Naive thymus-derived CD8-positive, alpha-beta T cell (primary cell): ENCODE measurements at regions of chr5 and their contacts with region 1.

Region 1: DNA sequence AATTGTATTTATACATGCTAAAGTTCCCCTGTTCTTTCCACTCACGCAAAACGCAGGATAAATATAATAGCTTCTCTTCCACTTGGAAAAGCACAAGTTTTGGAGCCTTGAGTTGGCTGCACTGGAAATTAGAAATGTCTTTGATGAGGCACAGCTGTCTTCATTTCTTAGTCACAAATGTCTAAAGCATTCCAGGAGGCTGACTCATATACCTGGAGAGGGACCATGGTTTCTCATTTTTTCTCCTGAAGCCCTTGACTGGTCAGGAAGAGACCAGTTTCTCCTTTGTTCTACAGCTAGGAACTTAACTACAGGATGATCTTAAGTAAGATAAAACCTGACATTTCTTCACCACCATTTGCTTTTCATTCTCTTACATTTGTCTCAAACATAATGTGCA is 16.2 kb downstream of the MTX3 start:
- DNase-seq: no peak
- ATAC-seq: no peak
- H3K4me3 Mint-ChIP-seq: no peak overlapping the region
- H3K27ac Mint-ChIP-seq: no peak overlapping the region
- H3K4me1 Mint-ChIP-seq: peaks cover 0 to 5% (median 1%) of the 10 kb centered on the region in 4 donors
- H3K27me3 Mint-ChIP-seq: peaks cover 0 to 3% (median 0%) of the 10 kb centered on the region in 5 donors

Region 2: DNA sequence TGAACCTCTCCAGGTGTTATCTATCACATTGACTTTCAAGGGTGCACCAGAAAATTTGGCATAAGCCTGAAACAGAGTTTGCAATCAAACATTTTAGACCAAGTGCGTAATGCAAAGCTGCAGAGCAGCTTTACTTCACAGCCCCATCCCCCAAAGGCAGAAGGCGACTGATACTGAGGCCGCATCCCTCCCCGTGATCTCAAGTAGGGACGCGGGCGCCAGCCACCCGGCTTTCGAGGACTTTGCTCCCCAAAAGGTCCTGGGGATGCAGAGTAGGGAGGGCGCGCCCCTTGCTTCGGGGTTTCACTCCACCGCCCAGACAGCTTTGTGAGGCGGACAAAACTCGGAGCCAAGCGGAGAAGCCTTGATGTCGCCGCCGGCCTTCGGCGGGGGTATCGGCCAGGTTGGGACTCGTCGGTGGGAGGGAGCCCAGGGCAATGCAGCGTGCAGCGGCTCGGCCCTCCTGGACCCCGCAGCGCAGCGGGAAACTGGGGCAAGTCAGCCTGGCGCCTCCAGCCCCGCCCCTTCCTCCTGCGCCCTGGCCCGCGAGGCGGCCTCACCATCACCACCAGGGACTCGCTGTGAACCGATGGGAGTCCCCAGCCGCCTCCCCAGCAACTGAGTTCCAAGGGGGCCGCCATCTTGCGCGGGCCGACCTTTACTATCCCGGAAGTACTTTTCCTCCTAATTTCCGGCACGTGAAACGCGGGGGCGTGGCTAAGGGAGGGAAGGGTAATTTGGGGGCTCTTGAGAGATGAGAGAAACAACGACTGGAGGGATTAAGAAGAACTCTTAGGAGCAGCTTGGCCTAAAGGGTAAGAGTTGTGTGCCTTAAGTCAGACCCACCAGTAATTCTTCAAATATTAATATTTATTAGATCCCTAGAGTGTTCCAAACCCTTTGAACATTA is 16.0 kb after region 1 on chr5 and contains the start of gene MTX3:
- POLR2A ChIA-PET with region 1: interaction called, 30 read pairs
- DNase-seq: peak; percentile 74 to 93 (median 84)
- ATAC-seq: peak; percentile 97
- H3K4me3 Mint-ChIP-seq: peak within 1 kb of the TSS; percentile 82 to 94 (median 90)
- H3K27ac Mint-ChIP-seq: peak within 1 kb of the TSS; percentile 79 to 97 (median 94)
- H3K4me1 Mint-ChIP-seq: peaks cover 10 to 32% (median 27%) of the 10 kb centered on the region in 4 donors
- H3K27me3 Mint-ChIP-seq: peaks cover 0 to 11% (median 6%) of the 10 kb centered on the region in 5 donors
- polyA plus RNA-seq, gene MTX3: 2.8 to 4.0 (median 3.1) TPM

Region 3: DNA sequence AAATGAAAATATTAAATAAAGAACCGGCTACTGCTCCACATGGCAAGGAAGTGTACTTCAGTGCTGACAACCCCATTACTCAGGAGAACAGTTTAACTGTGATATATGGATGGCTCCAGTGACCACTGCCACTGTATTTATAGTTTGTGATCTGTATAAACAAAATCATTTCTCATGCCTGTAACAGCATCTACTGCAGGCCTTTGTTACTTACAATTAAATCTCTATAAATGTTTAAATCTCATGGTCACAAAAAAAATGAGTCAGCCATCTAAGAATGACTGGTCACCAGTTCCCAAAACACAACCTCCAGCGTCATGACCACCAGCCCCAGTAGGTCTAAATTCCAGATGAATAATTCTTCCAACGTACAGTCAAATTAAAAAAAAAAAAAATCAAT is 256.4 kb after region 1 on chr5:
- POLR2A ChIA-PET with region 1: no interaction called
- DNase-seq: no peak
- ATAC-seq: no peak
- H3K4me3 Mint-ChIP-seq: peak overlapping the region in 7 of 10 donors; percentile 31 to 70 (median 59)
- H3K27ac Mint-ChIP-seq: peak overlapping the region; percentile 62 to 98 (median 82)
- H3K4me1 Mint-ChIP-seq: peaks cover 38 to 88% (median 81%) of the 10 kb centered on the region in 4 donors
- H3K27me3 Mint-ChIP-seq: no peaks in the 10 kb centered on the region